ENCODE measurements at regions of chr20 and their contacts with region 1.

Region 1: DNA sequence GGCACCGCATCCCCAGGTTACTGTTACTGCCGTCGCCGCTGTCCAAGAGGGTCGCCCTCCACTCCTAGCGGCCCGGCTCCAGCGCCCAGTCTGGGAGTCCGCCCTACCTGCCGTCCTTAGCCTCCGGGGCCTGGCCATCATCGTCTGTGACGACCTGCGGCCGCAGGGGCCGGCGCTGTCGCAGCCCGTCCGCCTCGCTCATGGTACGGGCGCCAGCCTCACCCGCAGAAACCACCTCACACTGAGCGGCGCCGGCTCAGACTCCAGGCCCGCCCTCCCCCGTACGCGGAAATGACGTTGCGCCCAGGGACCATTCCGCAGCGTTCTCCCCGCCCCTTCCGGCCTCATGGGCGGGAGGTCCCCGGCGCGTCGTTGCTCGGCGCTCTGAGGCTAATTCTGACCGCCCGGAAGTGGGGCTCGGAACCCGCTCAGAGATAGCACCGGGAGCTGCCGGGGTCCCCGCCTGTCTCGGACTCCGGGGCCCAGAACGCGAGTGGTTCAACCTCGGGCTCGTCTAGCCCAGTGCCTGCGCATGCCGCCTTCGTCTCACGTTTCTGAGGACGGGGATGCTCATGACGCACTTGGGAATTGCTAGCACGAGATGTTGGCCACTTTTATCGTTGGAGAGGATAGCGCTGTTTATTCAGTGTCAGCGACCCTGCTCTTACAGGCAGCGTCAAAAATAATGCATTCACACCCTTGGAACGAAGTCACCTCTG is at the start of gene APMAP:
- DNase-seq: peak; percentile 99
- H3K4me3 Mint-ChIP-seq: peak within 1 kb of the TSS; percentile 99
- H3K27ac Mint-ChIP-seq: peak within 1 kb of the TSS; percentile 94
- H3K4me1 Mint-ChIP-seq: peaks cover 51% of the 10 kb centered on the region
- H3K27me3 Mint-ChIP-seq: peaks cover 18% of the 10 kb centered on the region
- total RNA-seq, gene APMAP: 56.4 and 56.8 TPM in 2 replicates

Region 2: GRCh38 chr20:24948939-24949679 is 43.5 kb before region 1 on chr20 and contains the start of gene CST7:
- intact Hi-C with region 1: loop called (anchors 1 kb)
- DNase-seq: peak; percentile 95
- H3K4me3 Mint-ChIP-seq: peak within 1 kb of the TSS; percentile 95
- H3K27ac Mint-ChIP-seq: peak within 1 kb of the TSS; percentile 98
- H3K4me1 Mint-ChIP-seq: peaks cover 67% of the 10 kb centered on the region
- H3K27me3 Mint-ChIP-seq: no peaks in the 10 kb centered on the region
- total RNA-seq, gene CST7: 115 and 117 TPM in 2 replicates

Region 3: DNA sequence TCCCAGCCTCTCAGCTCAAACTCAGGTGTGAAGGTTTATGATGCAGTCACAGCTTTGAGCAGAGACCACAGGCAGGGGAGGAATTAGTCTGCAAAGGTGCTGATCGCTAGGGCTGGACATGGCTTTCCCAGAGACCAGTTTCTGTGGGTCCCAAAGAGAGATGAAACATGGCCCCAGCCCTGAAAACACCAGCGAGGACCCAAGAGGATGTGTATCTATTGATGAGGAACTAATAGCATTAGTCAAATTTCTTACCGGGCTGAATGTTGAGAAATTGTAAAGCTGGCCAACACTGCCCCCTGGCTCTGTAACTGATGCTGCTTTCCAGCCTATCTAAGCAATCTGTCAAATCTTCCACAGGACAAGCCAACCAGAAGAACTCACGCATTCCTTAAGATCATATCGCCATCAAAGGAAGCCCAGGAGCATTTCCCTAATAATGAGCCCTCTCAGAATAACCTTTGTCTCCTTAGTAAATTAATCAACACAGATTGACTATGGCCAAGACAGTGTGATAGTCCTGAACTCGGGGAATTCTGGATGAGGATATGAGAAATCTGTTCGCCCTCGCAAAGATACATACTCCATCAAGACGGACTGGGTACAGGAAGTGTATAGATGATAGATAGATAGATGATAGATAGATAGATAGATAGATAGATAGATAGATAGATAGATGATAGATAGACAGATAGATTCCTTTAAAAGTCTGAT is 73.1 kb after region 1 on chr20:
- intact Hi-C with region 1: loop called (anchors 1 kb)
- DNase-seq: peak; percentile 89
- H3K4me3 Mint-ChIP-seq: no peak overlapping the region
- H3K27ac Mint-ChIP-seq: no peak overlapping the region
- H3K4me1 Mint-ChIP-seq: peaks cover 3% of the 10 kb centered on the region
- H3K27me3 Mint-ChIP-seq: peaks cover 50% of the 10 kb centered on the region

Region 4: GRCh38 chr20:25090492-25091429 is 98.1 kb after region 1 on chr20:
- intact Hi-C with region 1: no loop called
- DNase-seq: peak; percentile 86
- H3K4me3 Mint-ChIP-seq: peak overlapping the region; percentile 40
- H3K27ac Mint-ChIP-seq: no peak overlapping the region
- H3K4me1 Mint-ChIP-seq: peaks cover 15% of the 10 kb centered on the region
- H3K27me3 Mint-ChIP-seq: peaks cover 19% of the 10 kb centered on the region

Region 5: GRCh38 chr20:25178563-25179438 is 186.2 kb after region 1 on chr20:
- intact Hi-C with region 1: loop called (anchors 1 kb)
- DNase-seq: peak; percentile 77
- H3K4me3 Mint-ChIP-seq: no peak overlapping the region
- H3K27ac Mint-ChIP-seq: no peak overlapping the region
- H3K4me1 Mint-ChIP-seq: peaks cover 2% of the 10 kb centered on the region
- H3K27me3 Mint-ChIP-seq: peaks cover 20% of the 10 kb centered on the region

Region 6: DNA sequence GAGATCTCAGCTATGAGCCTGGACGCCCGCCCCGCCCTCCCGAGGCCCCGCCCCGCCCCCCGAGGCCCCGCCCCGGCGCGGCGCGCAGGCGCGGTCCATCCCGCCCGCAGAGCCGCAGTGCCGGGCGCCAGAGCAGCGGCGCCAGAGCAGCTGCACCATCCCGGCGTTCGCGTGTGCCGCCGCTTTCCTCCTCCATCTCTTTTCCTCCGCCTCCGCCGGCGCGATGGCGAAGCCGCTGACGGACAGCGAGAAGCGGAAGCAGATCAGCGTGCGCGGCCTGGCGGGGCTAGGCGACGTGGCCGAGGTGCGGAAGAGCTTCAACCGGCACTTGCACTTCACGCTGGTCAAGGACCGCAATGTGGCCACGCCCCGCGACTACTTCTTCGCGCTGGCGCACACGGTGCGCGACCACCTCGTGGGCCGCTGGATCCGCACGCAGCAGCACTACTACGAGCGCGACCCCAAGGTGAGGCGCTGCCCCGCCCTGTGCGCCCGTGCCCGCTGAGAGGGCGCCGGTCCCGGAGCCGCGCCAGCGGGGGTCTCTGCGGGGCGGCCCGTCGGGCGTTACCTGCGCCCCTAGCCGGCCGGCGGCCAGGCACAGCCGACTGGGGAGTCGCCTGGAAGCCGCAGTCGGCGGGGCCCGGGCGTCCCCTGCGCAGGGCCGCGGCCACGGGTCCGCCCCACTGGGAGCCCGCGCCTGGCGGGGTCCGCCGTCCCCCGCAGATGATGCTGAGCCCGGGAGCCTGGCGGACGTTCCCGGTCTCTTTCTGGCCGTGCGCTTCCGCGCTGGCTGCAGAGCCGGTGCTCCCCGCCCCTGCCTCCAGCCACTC is 255.5 kb after region 1 on chr20 and contains the start of gene PYGB:
- intact Hi-C with region 1: loop called (anchors 2 kb)
- DNase-seq: peak; percentile 92
- H3K4me3 Mint-ChIP-seq: peak within 1 kb of the TSS; percentile 91
- H3K27ac Mint-ChIP-seq: peak within 1 kb of the TSS; percentile 90
- H3K4me1 Mint-ChIP-seq: peaks cover 32% of the 10 kb centered on the region
- H3K27me3 Mint-ChIP-seq: peaks cover 7% of the 10 kb centered on the region
- total RNA-seq, gene PYGB: 36.0 and 36.6 TPM in 2 replicates

Region 7: GRCh38 chr20:25390538-25391528 is 398.2 kb after region 1 on chr20 and contains the start of gene ABHD12:
- intact Hi-C with region 1: loop called (anchors 2 kb)
- DNase-seq: peak; percentile 98
- H3K4me3 Mint-ChIP-seq: peak within 1 kb of the TSS; percentile 90
- H3K27ac Mint-ChIP-seq: peak within 1 kb of the TSS; percentile 94
- H3K4me1 Mint-ChIP-seq: peaks cover 16% of the 10 kb centered on the region
- H3K27me3 Mint-ChIP-seq: no peaks in the 10 kb centered on the region
- total RNA-seq, gene ABHD12: 28.7 and 30.0 TPM in 2 replicates